ENCODE measurements at regions of chr3 and their contacts with region 1.

Region 1: DNA sequence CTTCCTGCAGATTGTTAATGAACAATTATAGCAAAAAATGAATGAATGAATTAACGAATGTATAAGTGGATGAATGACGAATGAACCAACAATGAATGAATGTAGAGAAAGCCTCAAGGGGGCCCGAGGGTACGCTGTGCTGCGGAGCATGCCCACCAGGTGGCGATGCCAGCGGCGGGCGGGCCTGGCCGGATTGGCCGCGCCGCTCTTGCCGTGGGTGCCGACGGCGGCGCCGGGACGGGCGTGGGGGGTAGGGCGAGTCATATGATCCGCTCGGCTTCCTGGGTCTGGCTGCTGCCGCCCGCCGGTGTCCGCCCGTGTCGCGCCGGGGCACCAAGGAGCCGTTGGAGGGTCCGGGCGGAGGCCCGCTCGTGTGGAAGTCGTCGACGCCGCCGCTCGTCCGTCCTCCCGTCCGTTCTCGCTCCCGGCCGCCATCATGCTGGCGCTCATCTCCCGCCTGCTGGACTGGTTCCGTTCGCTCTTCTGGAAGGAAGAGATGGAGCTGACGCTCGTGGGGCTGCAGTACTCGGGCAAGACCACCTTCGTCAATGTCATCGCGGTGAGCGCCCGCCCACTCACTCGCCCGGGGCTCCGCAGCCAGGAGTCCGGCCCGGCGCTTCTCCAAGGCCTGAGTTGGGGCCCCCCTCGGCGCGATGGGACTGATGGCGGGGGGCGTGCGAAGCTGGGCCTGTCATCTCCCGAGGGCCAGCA is at the start of gene ARL8B:
- DNase-seq: peak; percentile 96
- ATAC-seq: peak; percentile 84
- H3K4me3 Mint-ChIP-seq: peak within 1 kb of the TSS; percentile 83
- H3K27ac Mint-ChIP-seq: peak within 1 kb of the TSS; percentile 94
- H3K4me1 Mint-ChIP-seq: peaks cover 42% of the 10 kb centered on the region
- H3K27me3 Mint-ChIP-seq: no peaks in the 10 kb centered on the region
- total RNA-seq, gene ARL8B: 44.7 to 45.1 TPM

Region 2: GRCh38 chr3:3179407-3180094 is 1942.6 kb before region 1 on chr3 and contains the start of gene CRBN:
- CTCF ChIA-PET with region 1: no interaction called
- POLR2A ChIA-PET with region 1: no interaction called
- intact Hi-C with region 1: loop called in 1 of 2 experiments (anchors 5 kb)
- DNase-seq: peak; percentile 93
- ATAC-seq: peak; percentile 92
- H3K4me3 Mint-ChIP-seq: peak within 1 kb of the TSS; percentile 87
- H3K27ac Mint-ChIP-seq: peak within 1 kb of the TSS; percentile 95
- H3K4me1 Mint-ChIP-seq: peaks cover 49% of the 10 kb centered on the region
- H3K27me3 Mint-ChIP-seq: no peaks in the 10 kb centered on the region
- total RNA-seq, gene CRBN: 38.4 to 42.6 TPM

Region 3: DNA sequence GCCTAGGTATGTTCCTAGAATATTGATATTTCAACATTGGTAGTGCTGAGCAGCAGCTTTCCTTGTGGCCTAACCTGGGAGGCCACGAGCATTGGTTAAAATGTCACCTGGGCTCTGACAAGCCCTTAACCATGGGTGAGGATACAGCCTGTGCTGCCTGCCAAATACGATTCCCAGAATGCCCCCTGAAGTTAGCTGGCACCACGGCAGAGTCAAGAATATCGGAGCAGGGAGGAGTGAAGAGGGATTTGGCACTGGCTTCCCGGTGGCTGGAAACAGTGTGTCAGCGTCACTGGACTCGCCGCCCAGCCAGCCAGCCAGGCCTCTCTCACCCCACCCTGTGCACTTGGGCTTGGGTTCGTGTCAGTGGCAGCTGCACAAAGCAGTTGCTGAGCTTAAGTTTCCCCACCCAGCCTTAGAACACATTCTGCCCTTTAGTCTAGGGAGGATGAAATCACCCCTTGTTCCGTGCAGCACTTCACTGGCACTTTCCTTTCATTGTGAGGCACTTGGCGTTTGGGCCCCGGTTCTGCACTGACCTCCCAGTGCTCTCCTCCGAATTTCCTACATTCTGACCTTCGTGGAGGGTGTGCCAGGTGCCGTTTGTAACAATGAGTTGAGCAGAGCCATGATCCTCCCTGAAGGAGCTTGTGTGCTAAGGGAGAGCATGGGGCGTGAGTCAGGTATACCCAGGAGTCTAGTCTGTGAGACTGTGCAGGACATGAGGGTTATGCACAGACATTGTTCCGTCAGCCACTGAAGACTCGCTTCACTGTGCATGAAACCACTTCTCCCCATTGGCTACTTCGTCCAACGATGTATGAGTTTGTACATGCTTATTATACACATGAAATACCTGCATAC is 295.7 kb before region 1 on chr3:
- CTCF ChIA-PET with region 1: interaction called, 3 read pairs
- POLR2A ChIA-PET with region 1: interaction called, 4 read pairs
- intact Hi-C with region 1: loop called (anchors 1 to 5 kb)
- DNase-seq: no peak
- ATAC-seq: no peak
- H3K4me3 Mint-ChIP-seq: peak overlapping the region; percentile 62
- H3K27ac Mint-ChIP-seq: peak overlapping the region; percentile 87
- H3K4me1 Mint-ChIP-seq: peaks cover 95% of the 10 kb centered on the region
- H3K27me3 Mint-ChIP-seq: no peaks in the 10 kb centered on the region

Region 4: GRCh38 chr3:5187156-5187919 is 65.2 kb after region 1 on chr3 and contains the start of gene EDEM1:
- CTCF ChIA-PET with region 1: interaction called, 9 read pairs
- POLR2A ChIA-PET with region 1: interaction called, 23 read pairs
- intact Hi-C with region 1: loop called (anchors 1 kb)
- DNase-seq: peak; percentile 97
- ATAC-seq: peak; percentile 84
- H3K4me3 Mint-ChIP-seq: peak within 1 kb of the TSS; percentile 99
- H3K27ac Mint-ChIP-seq: peak within 1 kb of the TSS; percentile 99
- H3K4me1 Mint-ChIP-seq: peaks cover 23% of the 10 kb centered on the region
- H3K27me3 Mint-ChIP-seq: no peaks in the 10 kb centered on the region
- total RNA-seq, gene EDEM1: 105 to 175 TPM

Region 5: GRCh38 chr3:5205165-5205941 is 83.2 kb after region 1 on chr3:
- CTCF ChIA-PET with region 1: interaction called, 6 read pairs
- POLR2A ChIA-PET with region 1: interaction called, 13 read pairs
- intact Hi-C with region 1: no loop called
- DNase-seq: peak; percentile 72
- ATAC-seq: peak; percentile 90
- H3K4me3 Mint-ChIP-seq: no peak overlapping the region
- H3K27ac Mint-ChIP-seq: peak overlapping the region; percentile 87
- H3K4me1 Mint-ChIP-seq: peaks cover 41% of the 10 kb centered on the region
- H3K27me3 Mint-ChIP-seq: no peaks in the 10 kb centered on the region

Region 6: GRCh38 chr3:5499404-5499803 is 377.2 kb after region 1 on chr3:
- CTCF ChIA-PET with region 1: no interaction called
- POLR2A ChIA-PET with region 1: no interaction called
- intact Hi-C with region 1: no loop called
- DNase-seq: no peak
- ATAC-seq: no peak
- H3K4me3 Mint-ChIP-seq: no peak overlapping the region
- H3K27ac Mint-ChIP-seq: no peak overlapping the region
- H3K4me1 Mint-ChIP-seq: peaks cover 12% of the 10 kb centered on the region
- H3K27me3 Mint-ChIP-seq: no peaks in the 10 kb centered on the region

Measured in activated CD4-positive, alpha-beta T cell treated with anti-CD3 and anti-CD28 coated beads for 36 hours (primary cell).